ENCODE measurements at regions of chr2 and their contacts with region 1.

Region 1: GRCh38 chr2:3558205-3559014 is at the start of gene RNASEH1:
- DNase-seq: peak; percentile 95 to 99 (median 98)
- ATAC-seq: peak; percentile 96
- H3K4me3 ChIP-seq: peak within 1 kb of the TSS; percentile 83
- H3K4me3 Mint-ChIP-seq: peak within 1 kb of the TSS; percentile 96
- H3K27ac ChIP-seq: peak within 1 kb of the TSS; percentile 92 to 93
- H3K27ac Mint-ChIP-seq: peak within 1 kb of the TSS; percentile 96
- H3K4me1 ChIP-seq: peaks cover 22% of the 10 kb centered on the region
- H3K4me1 Mint-ChIP-seq: peaks cover 47% of the 10 kb centered on the region
- H3K27me3 ChIP-seq: no peaks in the 10 kb centered on the region
- H3K27me3 Mint-ChIP-seq: no peaks in the 10 kb centered on the region
- CTCF ChIP-seq: no peak
- total RNA-seq, gene RNASEH1: 31.5 to 31.9 TPM

Region 2: DNA sequence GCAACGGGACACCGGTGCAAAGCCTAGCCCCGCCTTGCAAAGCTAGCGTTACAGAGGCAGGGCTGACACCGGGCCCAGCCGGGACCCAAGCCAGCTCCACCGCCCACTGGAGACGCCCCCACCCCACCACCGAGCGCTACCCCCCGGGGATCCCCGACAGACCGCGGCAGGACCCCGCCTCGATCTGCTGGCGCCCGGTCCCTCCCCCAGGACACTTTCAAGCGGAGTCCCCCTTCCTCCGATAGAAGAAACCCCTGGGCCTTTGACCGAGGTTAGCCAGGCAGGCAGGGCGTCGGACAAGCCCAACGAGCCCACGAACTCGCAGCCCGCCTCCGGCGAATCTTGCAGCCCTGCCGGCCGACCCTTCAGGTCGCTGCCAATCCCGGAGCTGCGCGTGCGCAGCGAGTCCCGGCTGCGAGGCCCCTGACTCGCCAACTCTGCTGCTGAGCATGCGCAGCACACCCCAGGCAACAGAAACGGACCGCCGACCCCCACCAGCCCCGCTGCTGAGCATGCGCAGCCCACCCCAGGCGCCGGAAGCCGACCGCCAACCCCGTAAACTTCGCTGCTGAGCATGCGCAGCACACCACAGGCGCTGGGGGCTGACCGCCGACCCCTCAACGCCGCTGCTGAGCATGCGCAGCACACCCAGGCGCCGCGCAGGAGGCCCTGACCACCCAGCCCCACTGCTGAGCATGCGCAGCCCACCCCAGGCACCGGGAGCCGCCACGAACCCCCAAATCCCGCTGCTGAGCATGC is 39.7 kb before region 1 on chr2:
- CTCF ChIA-PET with region 1: no interaction called
- POLR2A ChIA-PET with region 1: interaction called, 56 read pairs
- intact Hi-C with region 1: loop called (anchors 1 kb)
- DNase-seq: peak; percentile 94 to 99 (median 98)
- ATAC-seq: peak; percentile 65
- H3K4me3 ChIP-seq: peak overlapping the region; percentile 87
- H3K4me3 Mint-ChIP-seq: peak overlapping the region; percentile 94
- H3K27ac ChIP-seq: peak overlapping the region; percentile 76 to 96
- H3K27ac Mint-ChIP-seq: peak overlapping the region; percentile 88
- H3K4me1 ChIP-seq: peaks cover 24% of the 10 kb centered on the region
- H3K4me1 Mint-ChIP-seq: peaks cover 46% of the 10 kb centered on the region
- H3K27me3 ChIP-seq: no peaks in the 10 kb centered on the region
- H3K27me3 Mint-ChIP-seq: no peaks in the 10 kb centered on the region
- CTCF ChIP-seq: no peak

Region 3: GRCh38 chr2:3575534-3576262 is 17.3 kb after region 1 on chr2:
- CTCF ChIA-PET with region 1: interaction called, 5 read pairs
- POLR2A ChIA-PET with region 1: interaction called, 54 read pairs
- intact Hi-C with region 1: loop called (anchors 1 kb)
- DNase-seq: peak in 10 of 14 experiments; percentile 18 to 66 (median 30)
- ATAC-seq: peak; percentile 43
- H3K4me3 ChIP-seq: peak overlapping the region; percentile 70
- H3K4me3 Mint-ChIP-seq: peak overlapping the region; percentile 89
- H3K27ac ChIP-seq: peak overlapping the region; percentile 76 to 89
- H3K27ac Mint-ChIP-seq: peak overlapping the region; percentile 93
- H3K4me1 ChIP-seq: peaks cover 28% of the 10 kb centered on the region
- H3K4me1 Mint-ChIP-seq: peaks cover 46% of the 10 kb centered on the region
- H3K27me3 ChIP-seq: no peaks in the 10 kb centered on the region
- H3K27me3 Mint-ChIP-seq: no peaks in the 10 kb centered on the region
- CTCF ChIP-seq: no peak

Region 4: DNA sequence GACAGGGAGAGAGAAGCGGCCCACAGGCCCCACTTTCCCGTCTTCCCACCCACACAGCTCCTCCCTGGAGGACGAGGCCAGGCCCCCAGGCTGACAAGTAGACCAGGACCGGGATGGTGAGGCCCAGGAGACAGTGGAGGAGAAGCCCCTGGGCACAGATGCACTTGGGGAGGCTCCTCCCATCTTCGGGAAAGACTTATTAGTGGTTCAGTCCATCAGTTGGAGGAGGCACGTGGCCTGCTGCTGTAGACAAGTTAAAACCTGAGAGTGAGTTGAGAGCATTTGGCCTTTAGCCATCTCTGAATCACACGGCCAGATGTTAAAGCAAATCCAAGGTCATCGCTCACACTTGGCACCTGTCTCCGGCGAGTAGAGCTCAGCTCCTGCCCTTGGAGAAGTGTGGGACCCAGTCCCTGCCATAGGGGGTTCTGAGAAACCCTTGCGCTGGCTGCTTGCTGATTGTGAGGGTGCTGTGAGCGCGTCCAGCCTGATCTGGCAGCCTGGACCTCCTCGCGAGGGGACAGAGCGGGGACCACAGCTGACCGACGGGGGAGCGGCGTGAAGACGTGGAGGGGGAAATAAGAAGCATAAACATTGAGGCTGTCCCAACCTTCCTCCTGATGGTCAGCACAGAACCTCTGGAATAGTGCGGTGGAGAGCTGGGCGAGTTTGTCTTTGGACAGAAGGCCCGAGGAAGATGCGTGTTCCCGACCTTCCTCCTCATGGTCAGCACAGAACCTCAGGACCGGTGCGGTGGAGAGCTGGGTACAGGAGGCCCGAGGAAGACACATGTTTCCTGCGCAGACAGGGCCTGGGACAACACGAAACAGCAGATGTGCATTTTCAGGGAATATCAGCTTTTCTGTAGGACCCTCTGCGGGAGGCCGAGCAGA is 74.9 kb after region 1 on chr2:
- CTCF ChIA-PET with region 1: no interaction called
- POLR2A ChIA-PET with region 1: no interaction called
- intact Hi-C with region 1: no loop called
- DNase-seq: peak in 2 of 14 experiments; percentile 2 to 24
- ATAC-seq: no peak
- H3K4me3 ChIP-seq: no peak overlapping the region
- H3K4me3 Mint-ChIP-seq: no peak overlapping the region
- H3K27ac ChIP-seq: no peak overlapping the region
- H3K27ac Mint-ChIP-seq: no peak overlapping the region
- H3K4me1 ChIP-seq: no peaks in the 10 kb centered on the region
- H3K4me1 Mint-ChIP-seq: no peaks in the 10 kb centered on the region
- H3K27me3 ChIP-seq: no peaks in the 10 kb centered on the region
- H3K27me3 Mint-ChIP-seq: no peaks in the 10 kb centered on the region
- CTCF ChIP-seq: no peak

Measured in CD4-positive, alpha-beta T cell (primary cell).